Activated CD8-positive, alpha-beta T cell treated with anti-CD3 and anti-CD28 coated beads for 36 hours (primary cell): ENCODE measurements at regions of chr5 and their contacts with region 1.

Region 1: DNA sequence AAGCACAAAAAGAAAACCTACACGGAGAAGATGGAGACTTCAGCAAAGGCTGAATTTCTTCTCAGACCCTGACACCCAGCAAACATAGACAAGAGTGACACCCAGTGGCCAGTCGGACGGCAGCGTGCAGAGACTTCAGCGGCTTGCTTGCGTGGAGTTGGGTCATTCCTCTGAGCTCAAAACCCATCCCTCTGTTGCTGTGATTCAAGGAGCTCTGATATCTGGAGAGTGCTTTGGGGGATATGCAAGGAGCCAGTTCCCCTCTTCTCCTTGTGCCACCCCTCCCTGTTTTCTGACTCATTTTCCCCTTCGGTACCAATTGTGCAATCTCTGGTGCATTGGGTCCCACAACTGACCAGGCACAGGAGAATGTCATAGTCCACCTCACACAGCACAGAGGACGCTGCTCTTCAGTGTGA is 27.5 kb downstream of the SH3TC2 start:
- DNase-seq: peak; percentile 84
- ATAC-seq: peak; percentile 66
- H3K4me3 Mint-ChIP-seq: no peak overlapping the region
- H3K27ac Mint-ChIP-seq: no peak overlapping the region
- H3K4me1 Mint-ChIP-seq: peaks cover 20% of the 10 kb centered on the region
- H3K27me3 Mint-ChIP-seq: peaks cover 10% of the 10 kb centered on the region
- CTCF ChIP-seq: peak; percentile 78

Region 2: GRCh38 chr5:148957591-148958202 is 77.7 kb before region 1 on chr5:
- CTCF ChIA-PET with region 1: interaction called, 19 read pairs
- POLR2A ChIA-PET with region 1: no interaction called
- intact Hi-C with region 1: no loop called
- DNase-seq: peak; percentile 74
- ATAC-seq: peak; percentile 73
- H3K4me3 Mint-ChIP-seq: no peak overlapping the region
- H3K27ac Mint-ChIP-seq: no peak overlapping the region
- H3K4me1 Mint-ChIP-seq: no peaks in the 10 kb centered on the region
- H3K27me3 Mint-ChIP-seq: peaks cover 2% of the 10 kb centered on the region
- CTCF ChIP-seq: peak; percentile 97

Region 3: DNA sequence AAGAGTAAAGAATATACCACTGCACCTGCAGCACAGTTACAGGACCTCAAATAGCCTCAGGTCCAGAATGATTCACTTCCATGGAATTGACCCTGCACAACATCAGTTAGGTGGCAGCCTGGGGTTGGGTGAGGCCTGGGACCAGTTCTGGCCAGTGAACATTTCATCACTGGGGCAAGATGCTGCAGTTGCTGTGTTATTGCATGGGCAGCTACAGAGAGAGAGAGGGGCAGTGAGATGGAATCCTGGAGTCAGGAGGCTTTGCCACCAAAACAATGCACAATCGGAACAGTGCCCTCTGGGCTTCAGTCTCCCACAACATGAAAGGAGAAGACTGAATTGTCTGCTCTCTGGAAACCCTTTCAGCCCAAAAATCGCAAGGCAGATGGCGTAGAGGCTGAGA is 24.3 kb before region 1 on chr5:
- CTCF ChIA-PET with region 1: interaction called, 17 read pairs
- POLR2A ChIA-PET with region 1: no interaction called
- intact Hi-C with region 1: no loop called
- DNase-seq: no peak
- ATAC-seq: no peak
- H3K4me3 Mint-ChIP-seq: no peak overlapping the region
- H3K27ac Mint-ChIP-seq: no peak overlapping the region
- H3K4me1 Mint-ChIP-seq: no peaks in the 10 kb centered on the region
- H3K27me3 Mint-ChIP-seq: no peaks in the 10 kb centered on the region
- CTCF ChIP-seq: no peak

Region 4: GRCh38 chr5:149046196-149046829 is 10.9 kb after region 1 on chr5:
- CTCF ChIA-PET with region 1: interaction called, 12 read pairs
- POLR2A ChIA-PET with region 1: no interaction called
- intact Hi-C with region 1: no loop called
- DNase-seq: no peak
- ATAC-seq: no peak
- H3K4me3 Mint-ChIP-seq: no peak overlapping the region
- H3K27ac Mint-ChIP-seq: no peak overlapping the region
- H3K4me1 Mint-ChIP-seq: no peaks in the 10 kb centered on the region
- H3K27me3 Mint-ChIP-seq: peaks cover 2% of the 10 kb centered on the region
- CTCF ChIP-seq: no peak

Region 5: DNA sequence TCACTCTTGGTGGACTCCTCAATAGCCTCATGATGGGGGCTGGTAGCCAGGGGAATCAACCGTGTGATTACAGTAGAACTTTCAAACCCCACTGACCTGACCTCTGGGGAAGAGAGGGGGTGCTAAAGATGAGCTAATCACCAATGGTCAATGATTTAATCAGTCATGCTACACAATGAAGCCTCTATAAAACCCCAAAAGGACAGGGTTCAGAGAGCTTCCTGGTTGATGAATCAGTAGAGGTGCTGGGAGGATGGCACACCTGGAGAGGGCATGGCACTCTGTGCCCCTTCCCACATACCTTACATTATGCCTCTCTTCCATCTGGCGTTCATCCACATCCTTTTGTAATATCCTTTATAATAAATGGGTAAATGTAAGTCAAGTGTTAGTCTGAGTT is 36.4 kb after region 1 on chr5:
- CTCF ChIA-PET with region 1: interaction called, 12 read pairs
- POLR2A ChIA-PET with region 1: no interaction called
- intact Hi-C with region 1: no loop called
- DNase-seq: no peak
- ATAC-seq: no peak
- H3K4me3 Mint-ChIP-seq: no peak overlapping the region
- H3K27ac Mint-ChIP-seq: no peak overlapping the region
- H3K4me1 Mint-ChIP-seq: no peaks in the 10 kb centered on the region
- H3K27me3 Mint-ChIP-seq: peaks cover 11% of the 10 kb centered on the region
- CTCF ChIP-seq: no peak

Region 6: DNA sequence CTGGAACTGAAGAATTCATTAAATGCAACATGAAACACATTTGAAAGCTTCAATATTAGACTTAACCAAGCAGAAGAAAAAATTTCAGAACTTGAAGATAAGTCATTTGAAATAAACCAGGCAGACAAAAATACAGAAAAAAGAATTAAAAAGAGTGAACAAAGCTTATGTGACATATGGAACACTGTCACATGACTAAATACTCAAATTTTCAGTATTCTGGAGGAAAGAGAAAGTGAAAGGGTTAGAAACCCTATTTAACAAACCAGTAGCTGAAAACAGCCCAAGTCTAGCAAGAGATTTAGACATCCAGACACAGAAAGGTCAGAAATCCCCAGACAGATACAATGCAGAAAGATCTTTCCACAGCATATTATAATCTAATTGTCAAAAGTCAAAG is 64.5 kb after region 1 on chr5:
- CTCF ChIA-PET with region 1: no interaction called
- POLR2A ChIA-PET with region 1: no interaction called
- intact Hi-C with region 1: no loop called
- DNase-seq: no peak
- ATAC-seq: no peak
- H3K4me3 Mint-ChIP-seq: no peak overlapping the region
- H3K27ac Mint-ChIP-seq: no peak overlapping the region
- H3K4me1 Mint-ChIP-seq: no peaks in the 10 kb centered on the region
- H3K27me3 Mint-ChIP-seq: peaks cover 4% of the 10 kb centered on the region
- CTCF ChIP-seq: no peak